Calu3 (cell line): ENCODE measurements at regions of chr3 and their contacts with region 1.

Region 1: GRCh38 chr3:134373994-134374790 is at the start of gene AMOTL2:
- DNase-seq: peak; percentile 99
- H3K4me3 Mint-ChIP-seq: peak within 1 kb of the TSS; percentile 78
- H3K27ac Mint-ChIP-seq: peak within 1 kb of the TSS; percentile 71
- H3K4me1 Mint-ChIP-seq: peaks cover 78% of the 10 kb centered on the region
- H3K27me3 Mint-ChIP-seq: no peaks in the 10 kb centered on the region
- CTCF ChIP-seq: no peak
- total RNA-seq, gene AMOTL2: 140 and 153 TPM in 2 replicates

Region 2: DNA sequence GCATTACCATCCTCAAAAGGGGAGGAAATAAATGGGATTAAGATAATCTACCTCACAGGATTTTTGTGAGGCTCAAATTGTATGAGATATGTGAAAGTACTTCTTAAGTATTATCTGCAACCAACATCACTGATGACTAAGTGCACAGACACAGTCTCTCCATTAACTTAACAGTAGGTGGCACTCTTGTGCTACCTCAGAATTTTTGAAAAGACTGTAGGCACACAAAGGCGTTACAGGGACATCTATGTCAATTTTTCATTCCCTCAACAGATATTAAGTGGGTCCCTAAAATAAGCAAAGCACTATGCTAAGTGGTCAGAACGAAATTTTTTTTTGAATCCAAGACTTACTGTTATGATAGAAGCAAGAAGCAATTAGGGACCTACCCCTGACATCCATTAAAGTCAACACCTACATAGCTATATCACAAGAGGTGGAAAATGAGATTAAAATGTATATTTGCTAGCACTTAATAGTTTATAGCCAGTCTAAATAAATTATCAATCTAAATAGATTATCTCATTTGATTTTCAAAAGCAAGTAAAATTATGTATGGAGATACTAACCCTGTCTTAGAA is 176.4 kb before region 1 on chr3:
- CTCF ChIA-PET with region 1: no interaction called
- intact Hi-C with region 1: loop called (anchors 5 kb)
- DNase-seq: peak; percentile 51
- H3K4me3 Mint-ChIP-seq: no peak overlapping the region
- H3K27ac Mint-ChIP-seq: no peak overlapping the region
- H3K4me1 Mint-ChIP-seq: peaks cover 23% of the 10 kb centered on the region
- H3K27me3 Mint-ChIP-seq: no peaks in the 10 kb centered on the region
- CTCF ChIP-seq: peak; percentile 84

Region 3: GRCh38 chr3:134308350-134308891 is 65.8 kb before region 1 on chr3:
- CTCF ChIA-PET with region 1: interaction called, 11 read pairs
- intact Hi-C with region 1: loop called (anchors 1 kb)
- DNase-seq: peak; percentile 95
- H3K4me3 Mint-ChIP-seq: peak overlapping the region; percentile 42
- H3K27ac Mint-ChIP-seq: peak overlapping the region; percentile 18
- H3K4me1 Mint-ChIP-seq: peaks cover 44% of the 10 kb centered on the region
- H3K27me3 Mint-ChIP-seq: peaks cover 14% of the 10 kb centered on the region
- CTCF ChIP-seq: peak; percentile 100

Region 4: DNA sequence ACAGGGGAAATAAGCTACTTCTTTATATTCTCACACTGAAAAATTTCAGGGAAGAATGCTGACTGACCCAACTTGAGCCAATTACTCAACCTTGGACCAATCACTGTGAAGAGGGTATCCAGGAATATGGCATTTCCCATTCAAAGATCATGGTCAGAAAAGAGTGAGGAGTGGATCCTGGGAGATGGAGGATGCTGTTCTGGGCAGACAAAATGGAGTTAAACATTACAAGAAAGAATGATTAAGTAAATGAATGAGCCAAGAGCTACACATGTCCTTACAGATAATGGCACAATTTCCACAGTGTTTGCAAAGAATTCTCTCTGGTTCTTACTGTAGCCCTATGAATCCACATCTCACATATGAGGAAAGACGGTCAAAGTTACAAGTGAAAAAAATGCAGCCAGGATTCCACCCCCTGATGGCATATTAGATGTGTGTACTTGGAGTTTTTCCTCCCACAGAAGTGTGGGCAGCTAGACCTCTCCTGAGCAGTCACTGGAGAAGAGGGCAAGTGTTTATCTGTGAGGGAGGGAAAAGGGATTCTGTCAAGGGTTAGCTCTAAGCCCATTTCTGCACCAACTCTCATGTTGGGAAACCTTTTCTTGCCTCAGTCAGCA is 33.7 kb before region 1 on chr3:
- CTCF ChIA-PET with region 1: no interaction called
- intact Hi-C with region 1: no loop called
- DNase-seq: no peak
- H3K4me3 Mint-ChIP-seq: no peak overlapping the region
- H3K27ac Mint-ChIP-seq: no peak overlapping the region
- H3K4me1 Mint-ChIP-seq: peaks cover 57% of the 10 kb centered on the region
- H3K27me3 Mint-ChIP-seq: no peaks in the 10 kb centered on the region
- CTCF ChIP-seq: no peak

Region 5: DNA sequence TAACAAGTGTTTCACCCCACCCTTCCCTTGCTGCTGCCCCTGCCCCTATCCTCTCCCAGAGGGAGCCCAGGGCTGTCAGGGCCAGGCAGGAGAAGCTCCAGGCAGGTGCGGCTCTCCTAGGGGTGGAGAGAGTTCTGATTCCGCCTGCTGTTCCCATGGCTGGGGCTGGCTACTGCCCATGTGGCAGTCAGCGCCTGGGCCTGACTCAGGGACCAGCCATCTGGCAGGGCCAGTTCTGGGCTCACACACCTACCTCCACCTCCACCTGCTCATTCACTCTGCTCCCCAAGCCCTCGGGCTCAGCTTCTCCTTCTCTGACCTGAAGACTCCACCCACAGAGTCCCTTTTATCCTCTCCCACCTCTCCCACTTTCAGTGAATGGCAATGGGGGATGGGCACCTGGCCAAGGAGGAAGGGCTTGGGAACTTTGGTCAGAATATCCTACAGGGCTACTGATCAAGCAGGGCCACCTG is 23.3 kb before region 1 on chr3:
- CTCF ChIA-PET with region 1: interaction called, 5 read pairs
- intact Hi-C with region 1: loop called (anchors 1 kb)
- DNase-seq: peak; percentile 93
- H3K4me3 Mint-ChIP-seq: peak overlapping the region; percentile 11
- H3K27ac Mint-ChIP-seq: peak overlapping the region; percentile 90
- H3K4me1 Mint-ChIP-seq: peaks cover 83% of the 10 kb centered on the region
- H3K27me3 Mint-ChIP-seq: no peaks in the 10 kb centered on the region
- CTCF ChIP-seq: no peak

Region 6: GRCh38 chr3:134357261-134358184 is 16.7 kb before region 1 on chr3:
- CTCF ChIA-PET with region 1: interaction called, 5 read pairs
- intact Hi-C with region 1: loop called (anchors 1 kb)
- DNase-seq: peak; percentile 89
- H3K4me3 Mint-ChIP-seq: peak overlapping the region; percentile 20
- H3K27ac Mint-ChIP-seq: peak overlapping the region; percentile 90
- H3K4me1 Mint-ChIP-seq: peaks cover 81% of the 10 kb centered on the region
- H3K27me3 Mint-ChIP-seq: no peaks in the 10 kb centered on the region
- CTCF ChIP-seq: no peak